ENCODE measurements at regions of chr3 and their contacts with region 1.

Region 1: GRCh38 chr3:122858373-122858772 is 63.5 kb downstream of the SLC49A4 start:
- DNase-seq: no peak
- ATAC-seq: no peak
- H3K4me3 ChIP-seq: no peak overlapping the region
- H3K27ac ChIP-seq: no peak overlapping the region
- H3K4me1 ChIP-seq: peaks cover 0 to 3% (median 0%) of the 10 kb centered on the region in 9 donors
- H3K27me3 ChIP-seq: no peaks in the 10 kb centered on the region
- CTCF ChIP-seq: peak in 7 of 9 donors; percentile 16 to 59 (median 50)

Region 2: DNA sequence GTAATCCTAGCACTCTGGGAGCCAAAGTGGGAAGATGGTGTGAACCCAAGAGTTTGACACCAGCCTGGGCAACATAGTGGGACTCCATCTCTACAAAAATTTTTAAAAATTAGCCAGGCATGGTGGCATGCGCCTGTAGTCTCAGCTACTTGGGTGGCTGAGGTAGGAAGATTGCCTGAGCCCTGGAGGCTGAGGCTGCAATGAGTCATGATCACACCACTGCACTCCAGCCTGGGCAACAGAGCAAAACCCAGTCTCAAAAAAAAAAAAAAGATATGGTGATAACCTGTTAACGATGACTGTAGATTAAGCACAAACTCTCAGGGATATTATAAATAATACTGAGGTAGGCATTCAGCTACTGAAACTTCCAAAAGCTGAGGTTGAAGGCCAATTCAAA is 44.0 kb after region 1 on chr3:
- intact Hi-C with region 1: loop called in 1 of 10 experiments (anchors 2 kb)
- DNase-seq: no peak
- ATAC-seq: no peak
- H3K4me3 ChIP-seq: no peak overlapping the region
- H3K27ac ChIP-seq: no peak overlapping the region
- H3K4me1 ChIP-seq: peaks cover 0 to 8% (median 0%) of the 10 kb centered on the region in 9 donors
- H3K27me3 ChIP-seq: peaks cover 0 to 6% (median 0%) of the 10 kb centered on the region in 7 donors
- CTCF ChIP-seq: no peak